Transverse colon (tissue), 4 donors: ENCODE measurements at regions of chr4 and their contacts with region 1.

Region 1: DNA sequence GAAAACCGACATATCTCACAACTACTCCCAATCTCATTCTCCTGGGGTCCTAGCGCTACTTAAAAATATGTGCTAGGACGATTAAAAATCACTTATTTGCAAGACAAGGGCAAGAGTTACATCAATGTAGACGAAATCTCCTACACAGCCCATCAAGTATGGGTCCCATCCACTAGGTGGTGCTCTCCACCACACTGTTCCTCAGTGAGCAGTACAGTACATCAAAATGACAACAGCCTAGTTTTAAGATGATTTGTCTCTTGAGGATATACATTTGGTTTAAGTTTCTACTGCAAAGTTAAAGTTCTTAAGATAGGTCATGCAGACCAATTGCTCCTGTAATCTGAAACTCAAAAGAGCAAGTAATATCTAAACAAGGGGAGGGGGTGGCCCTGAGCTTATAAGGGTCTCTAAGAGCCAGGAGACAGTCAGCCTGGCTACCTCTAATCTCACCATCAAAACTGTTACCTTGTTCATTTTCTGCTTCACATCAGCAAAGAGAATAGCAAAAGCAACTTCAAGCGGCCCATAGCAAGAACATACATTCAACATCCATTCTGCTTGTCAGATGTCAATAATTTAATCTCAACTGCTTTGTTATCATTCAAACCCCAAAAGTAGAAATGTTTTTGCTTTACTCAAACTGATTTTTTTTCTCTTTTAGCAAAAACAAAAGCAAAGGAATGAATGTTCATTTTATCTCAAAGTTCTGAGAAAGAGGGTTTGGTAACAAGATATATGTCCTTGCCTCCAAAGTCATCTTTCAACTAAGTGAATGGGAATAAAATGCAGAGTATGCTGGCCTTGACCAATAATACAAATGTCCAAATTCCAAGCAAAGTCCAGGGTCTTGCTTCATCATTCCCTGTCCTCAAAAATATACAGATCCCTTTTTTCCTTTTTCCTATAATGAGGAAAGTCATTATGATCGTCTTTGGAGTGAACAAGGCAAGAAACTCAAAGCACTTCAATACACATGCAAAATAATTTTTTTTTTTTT is 53.1 kb downstream of the STX18 start:
- DNase-seq: peak; percentile 77
- H3K4me3 ChIP-seq: no peak overlapping the region
- H3K27ac ChIP-seq: no peak overlapping the region
- H3K4me1 ChIP-seq: peaks cover 0 to 9% (median 0%) of the 10 kb centered on the region in 4 donors
- H3K27me3 ChIP-seq: no peaks in the 10 kb centered on the region
- CTCF ChIP-seq: peak; percentile 78 to 92 (median 82)
- EP300 ChIP-seq: no peak
- POLR2A ChIP-seq: no peak

Region 2: DNA sequence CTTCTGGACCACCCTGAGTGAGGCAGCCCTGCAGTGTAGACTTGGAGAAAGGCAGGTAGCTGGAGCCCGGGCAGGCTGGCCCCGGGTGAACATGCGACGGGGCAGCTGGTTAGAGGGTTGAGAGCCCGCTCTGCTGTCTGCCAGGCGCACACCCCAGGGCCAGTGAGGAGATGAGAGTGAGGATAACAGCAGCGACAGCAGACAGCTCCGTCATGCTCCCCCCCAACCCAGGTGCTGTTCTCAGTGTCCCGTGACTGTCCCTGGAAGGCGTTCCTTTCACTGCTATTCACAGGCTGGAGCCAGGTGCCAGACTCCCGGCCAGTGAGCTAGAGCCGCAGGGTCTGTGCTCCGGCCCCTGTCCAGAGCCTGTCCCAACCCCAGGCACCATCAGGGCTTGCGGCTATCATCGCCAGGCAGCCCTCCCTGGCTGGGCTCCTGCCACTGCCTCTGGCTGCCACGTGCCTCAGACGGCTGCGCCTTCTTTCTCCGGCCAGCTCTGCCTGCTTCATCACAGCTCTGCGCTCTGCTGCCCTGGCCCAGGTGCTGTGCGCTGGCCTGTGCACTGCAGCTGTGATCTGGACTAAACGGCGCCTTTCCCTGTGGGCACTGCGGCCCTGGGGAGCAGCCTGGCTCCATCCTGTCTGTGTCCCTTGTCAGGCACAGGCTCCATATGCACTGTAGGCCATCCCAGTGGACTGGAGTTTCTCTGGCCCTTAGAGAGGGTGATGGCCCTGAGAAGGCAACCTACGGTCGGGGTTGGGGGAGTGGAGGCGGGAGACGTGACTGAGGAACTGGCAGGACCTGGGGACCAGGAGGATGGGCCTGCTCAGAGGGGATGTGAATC is 82.0 kb before region 1 on chr4:
- in situ Hi-C with region 1: no loop called
- intact Hi-C with region 1: no loop called
- DNase-seq: no peak
- H3K4me3 ChIP-seq: no peak overlapping the region
- H3K27ac ChIP-seq: no peak overlapping the region
- H3K4me1 ChIP-seq: no peaks in the 10 kb centered on the region
- H3K27me3 ChIP-seq: no peaks in the 10 kb centered on the region
- CTCF ChIP-seq: no peak
- EP300 ChIP-seq: no peak
- POLR2A ChIP-seq: no peak

Region 3: GRCh38 chr4:4859390-4859842 is 370.7 kb after region 1 on chr4 and contains the start of gene MSX1:
- in situ Hi-C with region 1: loop called in 1 of 4 experiments (anchors 25 kb)
- intact Hi-C with region 1: no loop called
- DNase-seq: peak; percentile 76
- H3K4me3 ChIP-seq: peak within 1 kb of the TSS; percentile 38 to 69 (median 50)
- H3K27ac ChIP-seq: peak within 1 kb of the TSS in 2 of 4 donors; percentile 13 to 15
- H3K4me1 ChIP-seq: peaks cover 15 to 47% (median 33%) of the 10 kb centered on the region in 4 donors
- H3K27me3 ChIP-seq: peaks cover 100% of the 10 kb centered on the region
- CTCF ChIP-seq: no peak
- EP300 ChIP-seq: no peak
- POLR2A ChIP-seq: no peak
- total RNA-seq, gene MSX1: 0.41 TPM in 1 of 4 donors, not detected in the others

Region 4: DNA sequence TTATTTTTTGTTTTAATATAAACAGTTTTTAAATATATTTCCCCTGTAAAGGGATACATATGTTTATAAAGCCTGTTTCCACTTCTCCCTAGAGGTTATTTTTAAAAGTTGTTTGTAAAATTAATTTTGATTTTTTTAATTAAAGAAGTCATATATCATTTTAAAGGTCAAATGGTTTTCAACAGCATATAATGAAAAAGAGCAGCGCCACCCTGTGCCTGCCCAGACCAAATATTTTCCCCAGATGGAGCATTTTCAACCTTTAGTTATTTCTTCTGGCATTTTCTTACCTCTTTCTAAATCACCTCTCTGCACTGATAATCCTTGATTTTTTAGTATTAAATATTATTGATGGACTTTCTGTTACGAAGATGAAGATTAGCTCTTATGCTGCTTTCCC is 391.8 kb after region 1 on chr4:
- in situ Hi-C with region 1: loop called in 1 of 4 experiments (anchors 25 kb)
- intact Hi-C with region 1: no loop called
- DNase-seq: no peak
- H3K4me3 ChIP-seq: no peak overlapping the region
- H3K27ac ChIP-seq: no peak overlapping the region
- H3K4me1 ChIP-seq: no peaks in the 10 kb centered on the region
- H3K27me3 ChIP-seq: peaks cover 45% of the 10 kb centered on the region
- CTCF ChIP-seq: no peak
- EP300 ChIP-seq: no peak
- POLR2A ChIP-seq: no peak

Region 5: DNA sequence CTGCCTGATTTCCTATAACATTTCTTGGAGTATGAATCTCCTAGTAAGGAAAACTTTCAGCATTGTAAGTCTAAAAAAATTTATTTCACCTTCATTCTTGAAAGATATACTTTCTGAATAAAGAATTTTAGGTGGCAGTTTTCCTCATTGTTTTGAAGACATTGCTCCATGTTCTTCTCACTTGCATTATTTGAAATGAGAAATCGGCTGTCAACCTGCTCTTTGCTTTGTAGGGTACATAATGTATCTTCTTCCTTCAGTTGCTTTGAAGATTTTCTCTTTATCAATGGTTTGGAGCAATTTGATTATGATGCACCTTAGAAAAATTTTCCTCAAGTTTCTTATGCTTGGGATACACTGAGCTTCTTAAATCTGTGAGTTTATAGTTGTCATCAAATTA is 1099.3 kb after region 1 on chr4:
- in situ Hi-C with region 1: no loop called
- intact Hi-C with region 1: loop called (anchors 10 kb)
- DNase-seq: no peak
- H3K4me3 ChIP-seq: no peak overlapping the region
- H3K27ac ChIP-seq: no peak overlapping the region
- H3K4me1 ChIP-seq: no peaks in the 10 kb centered on the region
- H3K27me3 ChIP-seq: no peaks in the 10 kb centered on the region
- CTCF ChIP-seq: no peak
- EP300 ChIP-seq: no peak
- POLR2A ChIP-seq: no peak

Region 6: DNA sequence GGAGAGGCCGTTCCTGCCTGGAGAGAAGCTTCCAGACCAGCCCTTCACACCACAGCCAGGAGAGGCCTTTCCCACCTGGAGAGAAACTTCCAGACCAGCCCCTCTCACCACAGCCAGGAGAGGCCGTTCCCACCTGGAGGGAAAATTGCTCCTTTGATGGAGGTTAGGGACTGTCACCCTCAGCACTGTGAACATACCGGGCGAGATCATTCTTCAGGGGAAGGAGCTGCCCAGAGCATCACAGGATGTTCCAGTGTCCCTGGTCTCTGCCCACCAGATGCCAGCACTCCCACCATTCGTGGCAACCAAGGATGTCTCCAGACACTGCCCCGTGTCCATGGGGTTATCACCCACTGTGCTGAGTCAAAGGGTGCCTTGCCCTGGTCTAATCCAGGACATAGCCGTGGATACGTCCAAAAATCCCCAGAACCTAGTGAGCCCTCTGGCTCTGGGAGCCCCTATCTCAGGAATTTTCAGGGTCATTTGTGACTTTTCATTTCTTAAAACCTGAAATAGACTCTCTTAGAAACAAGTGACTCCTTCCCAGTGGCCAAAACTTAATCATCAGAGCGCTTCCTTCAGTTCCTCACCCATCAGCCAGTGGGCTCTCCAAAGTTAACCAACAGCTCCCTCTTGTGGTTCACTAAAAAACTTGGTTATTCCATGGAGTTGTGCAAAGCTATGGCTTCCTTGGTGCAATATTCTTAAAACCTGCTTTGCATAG is 1324.0 kb after region 1 on chr4:
- in situ Hi-C with region 1: loop called in 1 of 4 experiments (anchors 25 kb)
- intact Hi-C with region 1: no loop called
- DNase-seq: no peak
- H3K4me3 ChIP-seq: no peak overlapping the region
- H3K27ac ChIP-seq: no peak overlapping the region
- H3K4me1 ChIP-seq: no peaks in the 10 kb centered on the region
- H3K27me3 ChIP-seq: no peaks in the 10 kb centered on the region
- CTCF ChIP-seq: peak; percentile 57 to 66 (median 61)
- EP300 ChIP-seq: no peak
- POLR2A ChIP-seq: no peak